Head of caudate nucleus (tissue), 42 donors: ENCODE measurements at regions of chr1 and their contacts with region 1.

Region 1: GRCh38 chr1:28518000-28518744 is 12.3 kb downstream of the RCC1 start:
- DNase-seq: peak; percentile 77 to 96 (median 89)

Region 2: DNA sequence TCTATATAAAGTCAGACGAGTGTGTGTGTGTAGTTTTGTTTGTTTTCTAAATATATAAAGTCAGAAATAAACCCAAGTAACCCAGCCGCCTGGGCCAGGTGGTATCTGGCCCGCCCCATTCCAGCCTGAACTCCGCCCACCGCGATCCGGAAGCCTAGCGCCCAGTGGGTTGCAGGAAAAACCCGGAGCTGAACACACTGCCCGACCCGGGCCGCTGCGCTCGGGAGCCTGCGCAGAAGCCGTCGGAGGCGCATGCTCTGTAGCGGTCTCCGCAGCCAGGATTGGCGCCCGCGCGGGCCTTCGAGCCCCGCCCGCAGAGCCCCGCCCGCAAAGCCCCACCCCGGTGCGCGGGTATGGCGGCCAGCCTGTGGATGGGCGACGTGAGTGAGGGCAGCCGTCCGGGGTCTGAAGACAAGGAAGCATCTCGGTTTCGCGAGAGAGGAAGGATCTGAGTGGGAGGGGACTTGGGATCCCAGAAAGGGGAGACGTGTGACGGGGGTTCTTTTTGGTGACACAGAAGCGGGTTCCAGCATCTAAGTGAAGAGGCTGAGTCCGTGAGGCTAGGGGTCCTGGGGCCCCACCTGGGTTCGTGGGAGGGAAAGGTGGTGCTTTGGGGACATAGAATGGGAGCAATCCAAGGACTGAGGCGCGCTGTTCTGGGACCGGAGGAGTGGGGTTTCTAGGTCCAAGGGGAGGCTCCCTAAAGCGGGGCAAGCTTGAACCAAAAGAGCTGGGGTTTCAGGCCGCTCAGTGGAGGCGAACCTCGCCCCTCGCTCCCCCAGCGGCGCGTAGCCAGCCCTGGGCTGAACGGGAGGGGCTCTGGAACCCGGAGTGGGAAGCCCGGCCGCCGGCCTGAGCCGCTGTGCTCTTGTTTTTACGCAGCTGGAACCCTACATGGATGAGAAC is 34.8 kb after region 1 on chr1 and contains the start of gene TRNAU1AP:
- intact Hi-C with region 1: loop called (anchors 5 kb)
- DNase-seq: peak; percentile 87 to 98 (median 94)

Region 3: DNA sequence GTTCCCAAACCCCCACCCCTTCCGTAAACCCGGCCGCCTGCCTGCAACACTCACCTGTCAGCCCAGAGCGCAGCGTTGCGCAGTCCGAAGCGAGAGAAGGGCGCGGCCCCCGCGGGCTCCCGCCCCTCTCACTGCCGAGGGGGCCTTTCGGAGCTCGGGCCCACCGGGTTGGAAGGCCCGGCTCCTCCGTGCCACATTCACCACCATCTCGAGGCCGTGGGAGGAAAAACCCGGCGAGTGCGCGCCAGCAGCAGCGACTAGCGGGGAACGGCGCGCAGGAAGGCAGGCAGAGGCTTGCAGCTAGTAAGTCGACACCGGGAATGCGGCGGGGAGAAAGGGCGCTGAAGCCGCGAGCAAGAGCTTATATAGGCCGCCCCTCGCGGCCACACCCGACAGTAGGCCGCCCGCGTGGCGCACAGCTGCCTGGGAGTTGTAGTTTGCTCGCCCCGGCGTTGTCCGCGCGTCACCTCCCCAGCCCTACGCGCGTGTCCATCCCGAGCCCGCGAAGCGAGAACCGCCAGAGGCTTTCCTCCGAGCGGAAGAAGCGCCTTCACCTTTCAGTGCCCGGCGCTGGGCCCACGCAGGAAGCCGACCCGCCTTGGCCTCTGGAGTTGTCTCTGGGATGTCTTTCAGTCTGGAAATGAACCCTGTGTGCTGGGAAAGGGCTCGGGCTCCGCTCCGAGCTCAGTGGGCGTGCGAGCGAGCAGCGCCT is 63.5 kb after region 1 on chr1:
- intact Hi-C with region 1: loop called (anchors 5 kb)
- DNase-seq: peak; percentile 93 to 99 (median 97)

Region 4: DNA sequence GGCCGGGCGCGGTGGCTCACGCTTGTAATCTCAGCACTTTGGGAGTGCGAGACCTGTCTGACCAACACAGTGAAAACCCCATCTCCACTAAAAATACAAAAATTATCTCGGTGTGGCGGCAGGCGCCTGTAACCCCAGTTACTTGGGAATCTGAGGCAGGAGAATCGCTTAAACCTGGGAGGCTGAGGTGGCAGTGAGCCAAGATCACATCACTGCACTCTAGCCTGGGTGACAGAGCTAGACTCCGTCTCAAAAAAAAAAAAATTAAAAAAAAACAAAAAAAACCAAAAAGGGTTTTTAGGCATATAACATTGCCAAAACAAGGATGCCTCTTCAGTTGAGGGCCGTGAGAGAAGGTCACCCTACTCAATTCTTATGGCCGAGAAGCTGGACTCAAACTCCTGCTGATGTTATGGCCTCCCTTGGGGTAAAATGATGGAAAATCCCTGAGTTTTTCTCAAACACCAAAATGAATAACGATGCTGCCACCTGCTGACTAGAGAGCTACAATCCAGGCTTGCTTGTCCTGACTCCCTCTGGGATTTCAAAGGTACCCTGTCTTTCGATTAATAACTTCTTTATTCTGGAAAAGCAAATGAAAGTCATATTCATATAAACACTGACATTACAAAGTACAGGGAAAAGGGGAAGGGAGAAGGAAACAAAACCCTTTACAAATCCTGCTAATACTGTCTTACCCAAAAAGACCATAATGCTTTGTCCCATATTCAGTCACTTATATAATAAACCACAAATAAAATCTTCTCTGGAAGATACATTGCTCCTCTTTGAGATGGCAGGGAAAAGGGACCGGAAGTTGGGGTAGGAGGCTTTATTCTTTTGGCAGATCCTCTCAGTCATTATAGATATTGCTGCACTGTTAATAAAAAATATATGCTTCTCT is 84.6 kb after region 1 on chr1:
- intact Hi-C with region 1: loop called (anchors 2 kb)
- DNase-seq: peak in 38 of 42 donors; percentile 34 to 90 (median 75)